Ovary (tissue), 10 donors: ENCODE measurements at regions of chr11 and their contacts with region 1.

Region 1: GRCh38 chr11:7571640-7572000 is 57.8 kb downstream of the PPFIBP2 start:
- DNase-seq: peak; percentile 68 to 83 (median 81)
- H3K4me3 ChIP-seq: no peak overlapping the region
- H3K27ac ChIP-seq: no peak overlapping the region
- H3K4me1 ChIP-seq: peaks cover 17% of the 10 kb centered on the region
- H3K27me3 ChIP-seq: no peaks in the 10 kb centered on the region
- CTCF ChIP-seq: peak; percentile 93 to 96 (median 94)
- EP300 ChIP-seq: no peak
- POLR2A ChIP-seq: no peak

Region 2: GRCh38 chr11:7332962-7333361 is 238.7 kb before region 1 on chr11:
- intact Hi-C with region 1: no loop called
- DNase-seq: no peak
- H3K4me3 ChIP-seq: no peak overlapping the region
- H3K27ac ChIP-seq: no peak overlapping the region
- H3K4me1 ChIP-seq: no peaks in the 10 kb centered on the region
- H3K27me3 ChIP-seq: no peaks in the 10 kb centered on the region
- CTCF ChIP-seq: no peak
- EP300 ChIP-seq: no peak
- POLR2A ChIP-seq: no peak

Region 3: DNA sequence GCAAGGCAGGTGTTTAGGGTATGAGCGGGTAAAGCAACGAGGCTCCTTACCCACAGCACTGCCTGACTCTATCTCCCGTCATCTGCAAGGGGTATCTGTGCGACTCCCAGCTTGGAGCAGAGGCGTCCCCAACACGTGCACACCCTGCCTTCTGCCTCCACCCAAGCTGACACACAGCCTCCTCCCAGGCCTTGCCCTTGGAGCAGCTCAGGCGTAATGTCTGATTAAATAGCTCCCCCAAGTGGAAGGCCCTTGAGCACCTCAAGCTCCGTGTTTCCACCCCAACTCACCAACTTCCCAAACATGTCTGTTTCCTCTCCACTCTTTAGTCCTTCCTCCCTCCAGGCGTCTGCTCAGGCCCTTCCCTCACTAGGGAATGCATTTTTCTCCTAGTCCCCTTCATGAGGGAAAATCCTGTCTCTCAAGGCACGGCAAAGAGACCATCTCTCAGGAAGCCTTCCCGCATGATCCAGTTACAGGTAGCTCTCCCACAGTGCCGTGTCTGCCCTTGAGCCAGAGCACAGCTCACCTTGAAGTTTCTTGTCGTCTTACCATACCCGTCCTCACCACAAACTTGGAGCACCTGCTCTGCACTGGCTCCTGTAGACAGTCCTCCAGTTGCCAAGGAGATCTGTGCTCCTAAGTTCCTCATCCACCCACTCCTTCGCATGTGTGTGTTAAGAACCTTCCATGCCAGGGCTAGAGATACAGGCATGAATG is 85.8 kb after region 1 on chr11:
- intact Hi-C with region 1: loop called (anchors 2 to 5 kb)
- DNase-seq: peak; percentile 47 to 69 (median 61)
- H3K4me3 ChIP-seq: no peak overlapping the region
- H3K27ac ChIP-seq: no peak overlapping the region
- H3K4me1 ChIP-seq: no peaks in the 10 kb centered on the region
- H3K27me3 ChIP-seq: no peaks in the 10 kb centered on the region
- CTCF ChIP-seq: peak in 2 of 3 donors; percentile 42 to 47
- EP300 ChIP-seq: no peak
- POLR2A ChIP-seq: no peak